Activated CD4-positive, alpha-beta T cell treated with anti-CD3 and anti-CD28 coated beads for 36 hours (primary cell): ENCODE measurements at regions of chr4 and their contacts with region 1.

Region 1: DNA sequence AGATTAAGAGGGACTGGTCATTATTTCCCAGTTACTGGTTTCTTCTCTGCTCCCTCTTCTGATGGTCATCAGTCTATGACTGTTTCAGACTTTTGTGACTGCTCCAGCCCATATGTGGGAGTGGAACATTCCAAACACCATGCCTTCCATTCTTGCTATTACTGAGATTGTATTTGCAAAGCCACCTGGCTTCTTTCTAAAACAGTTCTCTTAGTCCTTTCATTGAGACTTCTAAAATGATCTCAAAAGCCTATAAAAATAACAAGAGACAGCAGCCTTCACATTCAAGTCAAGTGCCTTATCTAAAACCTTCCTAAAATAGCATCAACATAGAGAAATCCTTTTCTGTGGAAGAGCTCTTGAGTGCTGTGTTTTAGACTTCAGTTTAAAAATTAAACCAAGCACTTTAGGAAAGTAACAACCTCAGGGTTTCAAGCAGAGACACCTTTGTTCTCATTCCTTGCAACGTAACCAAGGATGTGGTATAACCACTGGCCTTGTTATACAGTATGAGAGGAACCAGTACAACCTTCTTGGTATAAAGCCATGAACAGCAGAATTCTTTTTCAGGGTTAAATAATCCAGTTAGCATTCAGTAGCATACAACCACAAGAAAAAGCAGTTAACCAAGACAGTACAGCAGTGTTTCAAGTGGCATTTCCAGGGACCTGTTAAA is 97.1 kb downstream of the NFKB1 start:
- DNase-seq: no peak
- ATAC-seq: peak; percentile 68
- H3K4me3 Mint-ChIP-seq: peak overlapping the region; percentile 18
- H3K27ac Mint-ChIP-seq: peak overlapping the region; percentile 90
- H3K4me1 Mint-ChIP-seq: peaks cover 70% of the 10 kb centered on the region
- H3K27me3 Mint-ChIP-seq: no peaks in the 10 kb centered on the region

Region 2: DNA sequence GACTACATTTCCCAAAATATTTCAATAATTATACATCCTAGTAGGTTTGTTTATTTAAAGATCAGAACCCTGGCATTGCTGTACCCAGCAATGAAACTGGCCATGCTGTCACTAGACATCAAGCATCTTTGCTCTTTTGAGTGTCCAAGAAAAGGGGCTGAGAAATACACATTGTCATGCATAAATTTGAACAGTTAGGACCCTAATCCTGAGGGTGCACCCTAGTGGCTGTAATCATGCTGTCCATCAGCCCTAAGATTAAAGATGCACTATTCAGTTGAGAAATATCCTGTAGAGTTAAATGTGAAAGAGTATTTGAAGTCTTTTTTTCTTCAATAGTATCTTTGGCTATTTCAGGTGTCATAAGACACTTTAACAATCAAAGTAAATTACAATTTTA is 11.8 kb after region 1 on chr4:
- CTCF ChIA-PET with region 1: interaction called, 5 read pairs
- POLR2A ChIA-PET with region 1: interaction called, 11 read pairs
- intact Hi-C with region 1: loop called in 1 of 2 experiments (anchors 1 kb)
- DNase-seq: no peak
- ATAC-seq: no peak
- H3K4me3 Mint-ChIP-seq: no peak overlapping the region
- H3K27ac Mint-ChIP-seq: peak overlapping the region; percentile 35
- H3K4me1 Mint-ChIP-seq: peaks cover 77% of the 10 kb centered on the region
- H3K27me3 Mint-ChIP-seq: no peaks in the 10 kb centered on the region